Activated naive CD4-positive, alpha-beta T cell treated with anti-CD3 and anti-CD28 coated beads for 36 hours (primary cell): ENCODE measurements at regions of chr13 and their contacts with region 1.

Region 1: GRCh38 chr13:51645154-51645650 is 60.9 kb downstream of the WDFY2 start:
- DNase-seq: peak; percentile 22
- H3K4me3 Mint-ChIP-seq: peak overlapping the region; percentile 30
- H3K27ac Mint-ChIP-seq: peak overlapping the region; percentile 39
- H3K4me1 Mint-ChIP-seq: peaks cover 40% of the 10 kb centered on the region
- H3K27me3 Mint-ChIP-seq: no peaks in the 10 kb centered on the region

Region 2: DNA sequence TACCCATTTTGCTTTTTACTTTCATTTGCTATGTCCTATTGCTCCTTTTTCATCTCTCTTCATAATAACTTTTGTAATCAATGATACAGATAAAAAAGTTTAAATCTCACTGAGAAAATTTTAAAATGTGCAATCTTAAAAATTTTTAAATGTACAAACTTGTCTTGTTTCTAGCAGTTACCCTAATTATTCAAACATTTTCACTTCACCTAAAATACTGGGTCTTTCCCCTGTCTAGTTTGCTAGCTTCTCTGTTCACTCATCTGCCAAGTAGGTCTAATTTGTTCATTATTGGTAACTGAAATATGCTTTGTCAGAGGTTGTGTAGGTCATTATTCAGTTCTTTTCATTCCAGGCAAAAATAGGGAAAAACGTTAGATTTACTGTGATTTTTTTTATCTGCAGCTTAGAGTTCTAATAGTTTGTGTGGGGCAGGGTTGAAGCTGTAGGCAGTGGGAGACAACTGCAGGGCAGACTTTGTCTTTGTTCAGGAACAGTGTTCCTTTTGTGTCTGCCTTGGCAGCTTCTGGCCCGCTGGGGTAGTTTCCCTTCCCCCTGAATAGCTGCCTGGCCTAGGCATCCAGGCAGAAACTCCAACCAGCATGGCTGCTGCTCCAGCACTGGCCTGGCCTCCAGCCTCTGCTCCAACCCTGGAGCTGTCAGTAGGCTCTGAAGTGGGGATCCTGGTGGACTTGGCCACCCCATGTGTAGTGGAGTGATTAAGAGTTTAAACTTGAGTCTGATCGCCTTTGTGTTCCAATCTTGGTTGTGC is 12.4 kb before region 1 on chr13:
- CTCF ChIA-PET with region 1: interaction called, 3 read pairs
- intact Hi-C with region 1: loop called (anchors 1 kb)
- DNase-seq: no peak
- H3K4me3 Mint-ChIP-seq: no peak overlapping the region
- H3K27ac Mint-ChIP-seq: no peak overlapping the region
- H3K4me1 Mint-ChIP-seq: peaks cover 57% of the 10 kb centered on the region
- H3K27me3 Mint-ChIP-seq: no peaks in the 10 kb centered on the region

Region 3: DNA sequence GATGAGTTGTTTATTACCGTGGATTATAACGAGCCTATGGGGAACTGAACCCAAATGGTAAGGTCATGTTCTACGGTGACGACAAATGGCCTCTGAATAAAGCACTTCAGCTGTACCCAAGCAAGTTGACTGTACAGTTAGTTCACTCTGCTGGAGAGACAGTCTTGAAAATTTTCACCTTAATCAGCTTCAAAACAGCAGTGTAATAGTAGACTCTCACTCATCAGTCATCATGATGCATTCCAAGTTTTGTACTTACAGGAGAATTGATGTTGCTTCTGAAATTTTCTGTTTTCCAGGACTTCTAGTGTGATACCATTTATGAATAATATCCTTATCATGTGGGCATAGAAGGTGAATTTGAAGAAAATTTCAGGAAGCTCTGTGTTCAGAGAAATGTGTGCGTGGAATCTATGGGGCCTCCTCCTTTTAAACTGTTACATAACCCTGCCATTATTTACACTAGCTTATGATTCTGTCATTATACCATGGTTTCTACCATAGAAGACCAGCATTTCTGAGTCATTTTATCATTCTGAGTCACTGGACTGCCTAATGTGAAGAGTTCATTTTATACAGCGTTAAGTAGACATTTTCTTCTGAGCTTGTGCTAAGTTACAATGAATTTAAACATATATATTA is 36.0 kb after region 1 on chr13:
- CTCF ChIA-PET with region 1: no interaction called
- intact Hi-C with region 1: loop called (anchors 2 kb)
- DNase-seq: no peak
- H3K4me3 Mint-ChIP-seq: no peak overlapping the region
- H3K27ac Mint-ChIP-seq: no peak overlapping the region
- H3K4me1 Mint-ChIP-seq: peaks cover 13% of the 10 kb centered on the region
- H3K27me3 Mint-ChIP-seq: no peaks in the 10 kb centered on the region

Region 4: DNA sequence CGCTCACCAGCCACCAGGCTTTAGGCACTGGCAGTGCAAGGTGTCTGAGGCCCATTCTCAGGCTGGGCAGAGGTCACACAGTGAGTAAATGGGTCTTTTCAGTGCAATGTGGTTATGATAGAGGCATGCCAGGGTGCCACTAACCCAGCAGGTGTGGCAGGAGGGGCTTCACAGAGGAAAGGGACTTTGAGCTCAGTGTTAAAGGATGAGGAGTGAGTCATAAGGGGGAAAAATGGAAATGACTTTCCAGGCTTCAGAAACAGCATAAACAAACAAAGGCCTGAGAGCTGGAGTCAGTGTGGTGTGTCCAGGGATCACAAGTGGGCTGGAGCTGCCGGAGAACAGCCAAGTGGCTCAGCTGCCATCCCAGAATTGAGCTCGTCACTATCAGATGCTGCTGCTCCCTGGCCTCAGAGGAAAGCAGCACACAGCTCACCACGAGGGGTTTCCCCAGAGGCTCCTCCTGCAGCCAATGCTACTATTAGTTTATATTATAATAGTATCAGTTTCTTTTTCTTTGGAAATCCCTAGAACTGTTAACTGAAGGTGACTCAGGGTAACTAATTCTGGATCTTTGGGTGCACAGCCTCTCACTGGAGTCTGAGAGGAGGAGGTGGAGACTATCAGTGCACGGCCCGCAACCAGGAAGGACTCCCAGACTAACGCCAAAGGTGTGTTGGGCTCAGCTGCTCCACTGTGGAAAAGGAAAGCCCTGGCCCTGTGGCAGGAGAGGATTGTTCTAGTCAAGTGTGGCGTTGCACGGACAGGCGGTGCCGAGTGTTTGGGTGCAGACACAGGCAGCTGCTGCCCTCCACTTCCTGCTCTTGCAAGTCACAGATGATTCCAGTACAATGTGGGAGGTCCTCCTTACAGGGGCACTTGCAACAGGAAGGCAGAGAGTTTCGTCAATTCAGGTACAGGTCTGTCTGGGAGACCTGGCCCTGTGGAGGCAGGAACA is 119.3 kb after region 1 on chr13:
- CTCF ChIA-PET with region 1: interaction called, 4 read pairs
- intact Hi-C with region 1: loop called (anchors 2 kb)
- DNase-seq: peak; percentile 84
- H3K4me3 Mint-ChIP-seq: peak overlapping the region; percentile 73
- H3K27ac Mint-ChIP-seq: peak overlapping the region; percentile 82
- H3K4me1 Mint-ChIP-seq: peaks cover 35% of the 10 kb centered on the region
- H3K27me3 Mint-ChIP-seq: no peaks in the 10 kb centered on the region